WTC11 (cell line): ENCODE measurements at regions of chr9 and their contacts with region 1.

Region 1: DNA sequence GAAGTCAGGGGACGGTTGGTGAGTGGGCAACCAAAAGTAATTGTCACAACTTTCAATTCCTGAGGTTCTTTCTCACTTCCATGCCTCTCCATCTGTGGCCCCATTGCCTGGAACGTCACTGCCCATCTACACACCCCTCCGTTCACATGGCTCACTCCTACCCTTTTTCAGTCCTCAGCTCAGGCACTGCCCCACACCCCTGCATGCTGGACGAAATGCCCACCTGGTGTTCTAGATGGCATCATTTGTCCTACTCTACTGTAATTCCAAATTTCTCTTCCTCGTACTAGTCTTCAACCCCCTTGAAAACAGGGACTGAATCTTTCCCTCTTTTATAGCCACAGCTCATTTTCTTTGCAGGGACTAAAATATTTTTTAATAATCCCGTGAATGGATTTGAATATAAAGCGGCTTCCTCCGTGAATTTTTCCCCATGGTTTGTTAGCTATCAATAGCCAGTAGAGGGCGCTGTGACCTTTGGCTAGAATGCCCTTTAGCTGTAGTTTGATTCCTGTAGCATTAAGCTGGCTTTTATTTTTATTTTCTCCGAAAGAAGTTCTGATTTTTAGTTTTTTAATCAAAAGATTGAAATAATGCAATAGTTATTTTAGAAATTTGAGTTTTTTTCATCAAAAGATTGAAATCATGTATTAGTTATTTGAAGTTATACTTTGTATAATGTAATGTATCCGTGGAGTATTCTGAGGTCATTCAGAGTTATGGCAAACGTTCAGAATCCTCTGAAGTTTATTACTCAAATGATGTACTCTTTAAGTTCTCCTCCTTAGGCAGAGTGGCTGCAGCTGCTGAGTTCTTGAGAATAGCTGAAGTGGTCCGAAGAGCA is 232.1 kb downstream of the SH3GL2 start:
- DNase-seq: peak; percentile 47
- ATAC-seq: peak; percentile 27
- H3K4me3 Mint-ChIP-seq: no peak overlapping the region
- H3K27ac Mint-ChIP-seq: no peak overlapping the region
- H3K4me1 Mint-ChIP-seq: no peaks in the 10 kb centered on the region
- H3K27me3 Mint-ChIP-seq: no peaks in the 10 kb centered on the region
- CTCF ChIP-seq: peak; percentile 84

Region 2: DNA sequence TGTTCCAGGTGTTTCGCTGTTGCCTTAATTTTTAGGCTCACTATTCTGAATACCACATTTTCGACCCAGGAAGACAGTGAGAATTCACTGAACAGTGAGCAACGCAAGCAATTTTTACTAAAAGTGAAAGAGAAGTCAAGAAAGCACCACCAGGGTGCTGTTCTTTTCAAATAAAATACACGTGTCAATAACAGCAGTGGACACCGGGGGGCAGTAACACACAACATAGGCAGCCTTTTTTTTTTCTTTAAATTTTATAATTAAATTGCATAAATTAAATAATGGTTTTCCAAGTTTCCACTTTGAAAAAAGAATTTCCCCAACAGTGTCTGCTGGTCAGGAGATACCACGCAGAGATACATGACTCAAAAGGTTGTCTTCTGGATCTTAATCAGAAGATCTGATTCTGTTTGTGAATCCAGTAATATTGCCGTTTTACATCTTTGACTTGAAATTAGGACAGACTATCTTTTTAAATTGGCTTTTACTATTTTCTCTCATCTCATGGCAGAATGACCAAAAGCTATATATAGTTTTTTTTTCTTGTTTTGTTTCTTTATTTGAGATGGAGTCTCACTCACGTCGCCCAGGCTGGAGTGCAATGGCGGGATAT is 279.2 kb before region 1 on chr9:
- CTCF ChIA-PET with region 1: interaction called, 10 read pairs
- POLR2A ChIA-PET with region 1: no interaction called
- DNase-seq: peak; percentile 52
- ATAC-seq: peak; percentile 65
- H3K4me3 Mint-ChIP-seq: no peak overlapping the region
- H3K27ac Mint-ChIP-seq: no peak overlapping the region
- H3K4me1 Mint-ChIP-seq: peaks cover 7% of the 10 kb centered on the region
- H3K27me3 Mint-ChIP-seq: no peaks in the 10 kb centered on the region
- CTCF ChIP-seq: peak; percentile 78

Region 3: GRCh38 chr9:17699615-17700330 is 111.2 kb before region 1 on chr9:
- CTCF ChIA-PET with region 1: no interaction called
- POLR2A ChIA-PET with region 1: no interaction called
- DNase-seq: no peak
- ATAC-seq: no peak
- H3K4me3 Mint-ChIP-seq: no peak overlapping the region
- H3K27ac Mint-ChIP-seq: no peak overlapping the region
- H3K4me1 Mint-ChIP-seq: no peaks in the 10 kb centered on the region
- H3K27me3 Mint-ChIP-seq: no peaks in the 10 kb centered on the region
- CTCF ChIP-seq: no peak

Region 4: DNA sequence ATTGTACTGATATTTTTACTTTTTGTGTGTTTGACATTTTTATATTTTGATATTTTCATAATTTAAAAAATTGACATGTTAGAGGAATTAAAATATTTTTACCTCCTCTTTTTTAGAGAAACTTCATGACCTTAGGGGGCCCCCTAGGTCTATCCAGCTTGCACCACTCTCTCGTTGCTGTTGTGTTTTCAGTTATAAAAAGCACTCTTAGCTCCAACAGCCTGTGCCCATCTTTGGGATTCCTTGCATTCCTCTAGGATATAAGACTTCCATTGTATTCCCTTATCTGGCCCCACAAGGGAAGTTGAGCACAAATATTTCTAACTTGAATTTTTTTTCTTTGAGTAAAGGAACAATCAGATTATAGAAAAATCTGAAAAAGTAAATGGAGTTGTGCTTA is 13.2 kb after region 1 on chr9:
- CTCF ChIA-PET with region 1: interaction called, 13 read pairs
- POLR2A ChIA-PET with region 1: no interaction called
- DNase-seq: no peak
- ATAC-seq: peak; percentile 85
- H3K4me3 Mint-ChIP-seq: no peak overlapping the region
- H3K27ac Mint-ChIP-seq: peak overlapping the region; percentile 73; the same call in 1 of the 2 replicates
- H3K4me1 Mint-ChIP-seq: peaks cover 19% of the 10 kb centered on the region
- H3K27me3 Mint-ChIP-seq: no peaks in the 10 kb centered on the region
- CTCF ChIP-seq: no peak

Region 5: GRCh38 chr9:17837965-17838364 is 27.0 kb after region 1 on chr9:
- CTCF ChIA-PET with region 1: interaction called, 34 read pairs
- POLR2A ChIA-PET with region 1: no interaction called
- DNase-seq: no peak
- ATAC-seq: peak; percentile 60; the same call in 1 of the 2 replicates
- H3K4me3 Mint-ChIP-seq: no peak overlapping the region
- H3K27ac Mint-ChIP-seq: no peak overlapping the region
- H3K4me1 Mint-ChIP-seq: peaks cover 9% of the 10 kb centered on the region
- H3K27me3 Mint-ChIP-seq: no peaks in the 10 kb centered on the region
- CTCF ChIP-seq: no peak

Region 6: GRCh38 chr9:17906176-17906840 is 95.4 kb after region 1 on chr9:
- CTCF ChIA-PET with region 1: interaction called, 16 read pairs
- POLR2A ChIA-PET with region 1: no interaction called
- DNase-seq: peak; percentile 63
- ATAC-seq: peak; percentile 58
- H3K4me3 Mint-ChIP-seq: peak overlapping the region; percentile 79
- H3K27ac Mint-ChIP-seq: no peak overlapping the region
- H3K4me1 Mint-ChIP-seq: peaks cover 11% of the 10 kb centered on the region
- H3K27me3 Mint-ChIP-seq: peaks cover 70% of the 10 kb centered on the region
- CTCF ChIP-seq: no peak

Region 7: GRCh38 chr9:18143028-18143745 is 332.2 kb after region 1 on chr9:
- CTCF ChIA-PET with region 1: interaction called, 15 read pairs
- POLR2A ChIA-PET with region 1: no interaction called
- DNase-seq: peak; percentile 10
- ATAC-seq: peak; percentile 82
- H3K4me3 Mint-ChIP-seq: no peak overlapping the region
- H3K27ac Mint-ChIP-seq: no peak overlapping the region
- H3K4me1 Mint-ChIP-seq: peaks cover 12% of the 10 kb centered on the region
- H3K27me3 Mint-ChIP-seq: no peaks in the 10 kb centered on the region
- CTCF ChIP-seq: no peak

Region 8: GRCh38 chr9:18208154-18209059 is 397.5 kb after region 1 on chr9:
- CTCF ChIA-PET with region 1: interaction called, 77 read pairs
- POLR2A ChIA-PET with region 1: no interaction called
- DNase-seq: peak; percentile 62
- ATAC-seq: peak; percentile 86
- H3K4me3 Mint-ChIP-seq: no peak overlapping the region
- H3K27ac Mint-ChIP-seq: no peak overlapping the region
- H3K4me1 Mint-ChIP-seq: peaks cover 17% of the 10 kb centered on the region
- H3K27me3 Mint-ChIP-seq: no peaks in the 10 kb centered on the region
- CTCF ChIP-seq: 0 out of 2 replicates have a peak, but pooled peaks have one; percentile 23